Sigmoid colon (tissue), 7 donors: ENCODE measurements at regions of chr14 and their contacts with region 1.

Region 1: DNA sequence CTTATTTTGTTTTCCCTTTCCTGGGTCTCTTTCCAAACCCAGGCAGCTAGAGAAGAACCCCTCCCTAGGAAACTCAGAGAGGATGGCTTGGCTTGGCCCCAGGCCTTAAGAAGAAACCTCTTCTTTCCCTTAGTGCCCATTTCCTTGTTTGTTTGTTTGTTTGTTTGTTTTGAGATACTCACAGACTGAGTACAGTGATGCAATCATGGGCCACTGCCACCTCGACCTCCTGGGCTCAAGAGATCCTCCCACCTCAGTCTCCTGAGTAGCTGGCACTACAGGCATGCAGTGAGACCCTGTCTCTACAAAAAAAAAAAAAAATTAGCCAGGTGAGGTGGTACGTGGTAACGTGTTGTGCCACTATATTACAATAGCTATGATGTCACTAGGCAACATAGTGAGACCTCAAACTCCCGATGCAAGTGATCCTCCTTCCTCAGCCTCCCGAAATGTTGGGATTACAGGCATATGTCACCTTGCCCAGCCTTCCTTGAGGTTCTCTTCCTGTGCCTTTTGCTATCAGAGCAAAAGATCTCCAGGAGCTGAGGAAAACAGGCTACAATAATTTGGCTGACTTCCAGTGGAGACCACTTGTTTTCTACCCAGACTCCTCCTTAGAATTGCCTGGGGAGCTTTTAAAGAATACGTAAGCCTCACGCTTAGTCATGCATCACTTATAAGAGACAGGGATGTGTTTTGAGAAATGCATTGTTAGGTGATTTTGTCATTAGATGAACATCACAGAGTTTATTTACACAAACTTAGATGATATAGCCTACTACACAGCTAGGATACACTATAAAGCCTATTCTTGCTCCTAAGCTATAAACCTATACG is 34.5 kb upstream of the LGALS3 start:
- DNase-seq: no peak
- H3K4me3 ChIP-seq: no peak overlapping the region
- H3K27ac ChIP-seq: no peak overlapping the region
- H3K4me1 ChIP-seq: peaks cover 0 to 6% (median 0%) of the 10 kb centered on the region in 4 donors
- H3K27me3 ChIP-seq: no peaks in the 10 kb centered on the region
- CTCF ChIP-seq: no peak
- EP300 ChIP-seq: no peak
- POLR2A ChIP-seq: no peak

Region 2: GRCh38 chr14:54854181-54854580 is 240.4 kb before region 1 on chr14:
- intact Hi-C with region 1: no loop called
- DNase-seq: no peak
- H3K4me3 ChIP-seq: no peak overlapping the region
- H3K27ac ChIP-seq: no peak overlapping the region
- H3K4me1 ChIP-seq: no peaks in the 10 kb centered on the region
- H3K27me3 ChIP-seq: no peaks in the 10 kb centered on the region
- CTCF ChIP-seq: no peak
- EP300 ChIP-seq: no peak
- POLR2A ChIP-seq: no peak

Region 3: GRCh38 chr14:55015006-55015405 is 79.5 kb before region 1 on chr14:
- intact Hi-C with region 1: no loop called
- DNase-seq: no peak
- H3K4me3 ChIP-seq: no peak overlapping the region
- H3K27ac ChIP-seq: no peak overlapping the region
- H3K4me1 ChIP-seq: no peaks in the 10 kb centered on the region
- H3K27me3 ChIP-seq: no peaks in the 10 kb centered on the region
- CTCF ChIP-seq: no peak
- EP300 ChIP-seq: no peak
- POLR2A ChIP-seq: no peak

Region 4: GRCh38 chr14:55129428-55130195 is 35.1 kb after region 1 on chr14:
- intact Hi-C with region 1: loop called (anchors 5 kb)
- DNase-seq: peak; percentile 88
- H3K4me3 ChIP-seq: peak overlapping the region; percentile 52 to 90 (median 84)
- H3K27ac ChIP-seq: peak overlapping the region; percentile 92 to 96 (median 94)
- H3K4me1 ChIP-seq: peaks cover 0 to 57% (median 35%) of the 10 kb centered on the region in 4 donors
- H3K27me3 ChIP-seq: no peaks in the 10 kb centered on the region
- CTCF ChIP-seq: no peak
- EP300 ChIP-seq: no peak
- POLR2A ChIP-seq: peak; percentile 37 to 63

Region 5: DNA sequence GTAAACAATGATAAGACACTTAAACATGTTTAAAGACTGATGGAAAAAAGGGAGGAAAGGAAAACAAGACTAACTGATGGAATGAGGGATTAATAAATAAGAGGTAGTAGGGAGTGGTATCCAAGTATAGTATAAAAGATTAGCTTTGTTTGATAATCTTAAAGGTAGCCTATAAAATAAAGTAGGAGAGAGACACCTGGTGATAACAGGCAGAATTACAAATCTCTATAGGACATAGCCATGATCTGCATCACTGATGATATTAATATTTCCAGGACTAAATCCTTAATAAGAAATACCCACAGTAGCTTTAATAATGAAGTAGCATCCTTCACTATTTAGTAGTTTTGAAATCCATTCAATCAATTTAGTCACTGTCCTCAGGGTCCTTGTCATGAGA is 66.5 kb after region 1 on chr14:
- intact Hi-C with region 1: loop called (anchors 1 kb)
- DNase-seq: no peak
- H3K4me3 ChIP-seq: no peak overlapping the region
- H3K27ac ChIP-seq: no peak overlapping the region
- H3K4me1 ChIP-seq: no peaks in the 10 kb centered on the region
- H3K27me3 ChIP-seq: no peaks in the 10 kb centered on the region
- CTCF ChIP-seq: peak in 3 of 4 experiments; percentile 22 to 61 (median 54)
- EP300 ChIP-seq: no peak
- POLR2A ChIP-seq: no peak